ENCODE measurements at regions of chr6 and their contacts with region 1.

Region 1: GRCh38 chr6:45801471-45802289 is 214.0 kb downstream of the CLIC5 start:
- DNase-seq: peak; percentile 84
- H3K4me3 Mint-ChIP-seq: no peak overlapping the region
- H3K27ac Mint-ChIP-seq: no peak overlapping the region
- H3K4me1 Mint-ChIP-seq: no peaks in the 10 kb centered on the region
- H3K27me3 Mint-ChIP-seq: peaks cover 8% of the 10 kb centered on the region

Region 2: GRCh38 chr6:45436544-45437438 is 364.9 kb before region 1 on chr6:
- CTCF ChIA-PET with region 1: no interaction called
- POLR2A ChIA-PET with region 1: no interaction called
- intact Hi-C with region 1: loop called (anchors 5 kb)
- DNase-seq: peak; percentile 67
- H3K4me3 Mint-ChIP-seq: peak overlapping the region; percentile 65
- H3K27ac Mint-ChIP-seq: peak overlapping the region; percentile 92
- H3K4me1 Mint-ChIP-seq: peaks cover 85% of the 10 kb centered on the region
- H3K27me3 Mint-ChIP-seq: no peaks in the 10 kb centered on the region

Region 3: DNA sequence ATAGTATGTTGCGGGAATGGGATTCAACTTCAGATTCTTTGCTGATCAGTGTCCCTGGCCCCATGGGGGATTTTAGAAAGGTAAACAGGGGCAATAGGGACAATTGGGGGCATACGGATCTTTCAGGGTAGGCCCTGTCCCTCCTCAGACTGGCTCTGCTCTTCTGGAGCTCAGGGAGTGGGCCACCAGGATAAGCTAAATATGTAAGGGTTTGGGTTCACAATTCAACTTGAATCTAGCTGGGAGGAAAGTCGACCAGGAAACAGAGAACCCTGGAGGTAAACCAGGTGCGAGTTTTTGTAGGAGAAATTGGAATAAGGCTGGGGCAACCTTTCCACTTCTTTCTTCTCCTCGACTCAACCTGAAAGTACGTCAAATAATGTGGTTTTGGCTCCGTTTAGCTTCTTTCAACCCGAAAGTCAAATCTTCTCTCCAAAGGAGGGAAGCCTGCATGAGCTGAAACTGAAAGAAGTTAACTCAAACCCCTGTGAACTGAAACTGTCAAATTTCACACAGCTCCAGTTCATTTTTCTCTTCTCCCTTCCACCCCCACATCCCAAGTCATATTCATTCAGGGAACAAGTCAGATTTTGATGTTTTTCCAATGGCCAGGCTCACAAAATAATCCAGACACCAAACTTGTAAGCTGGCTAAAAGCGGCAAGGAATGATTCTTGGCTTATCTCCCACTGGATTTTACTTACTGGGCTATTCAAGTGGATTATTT is 64.2 kb before region 1 on chr6:
- CTCF ChIA-PET with region 1: interaction called, 6 read pairs
- POLR2A ChIA-PET with region 1: interaction called, 12 read pairs
- intact Hi-C with region 1: loop called (anchors 1 kb)
- DNase-seq: peak; percentile 24
- H3K4me3 Mint-ChIP-seq: peak overlapping the region; percentile 10
- H3K27ac Mint-ChIP-seq: peak overlapping the region; percentile 75
- H3K4me1 Mint-ChIP-seq: peaks cover 59% of the 10 kb centered on the region
- H3K27me3 Mint-ChIP-seq: peaks cover 8% of the 10 kb centered on the region

Region 4: DNA sequence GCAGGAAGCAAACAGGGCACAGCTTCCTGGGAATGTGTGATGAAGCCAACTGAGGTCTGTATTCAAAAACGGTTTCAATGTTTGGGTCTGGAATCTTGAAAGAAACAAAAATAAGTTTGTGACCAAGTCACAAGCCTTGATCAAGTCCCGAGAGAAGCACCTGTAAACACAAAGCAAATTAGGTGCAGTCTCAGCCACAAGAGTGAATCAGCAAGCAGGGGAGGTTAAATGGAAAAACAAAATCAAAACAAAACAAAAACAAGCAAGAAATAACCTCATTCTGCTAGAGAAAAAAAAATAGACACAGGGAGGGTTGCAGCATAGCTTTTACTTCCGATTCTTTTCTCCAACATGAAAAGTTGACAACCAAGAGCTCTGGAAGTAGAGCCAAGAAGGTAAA is 12.3 kb after region 1 on chr6:
- CTCF ChIA-PET with region 1: no interaction called
- POLR2A ChIA-PET with region 1: interaction called, 7 read pairs
- intact Hi-C with region 1: loop called (anchors 1 kb)
- DNase-seq: no peak
- H3K4me3 Mint-ChIP-seq: no peak overlapping the region
- H3K27ac Mint-ChIP-seq: peak overlapping the region; percentile 46
- H3K4me1 Mint-ChIP-seq: peaks cover 38% of the 10 kb centered on the region
- H3K27me3 Mint-ChIP-seq: peaks cover 7% of the 10 kb centered on the region

Region 5: GRCh38 chr6:45830441-45831139 is 28.9 kb after region 1 on chr6:
- CTCF ChIA-PET with region 1: interaction called, 7 read pairs
- POLR2A ChIA-PET with region 1: interaction called, 13 read pairs
- intact Hi-C with region 1: loop called (anchors 1 kb)
- DNase-seq: peak; percentile 88
- H3K4me3 Mint-ChIP-seq: peak overlapping the region; percentile 75
- H3K27ac Mint-ChIP-seq: peak overlapping the region; percentile 95
- H3K4me1 Mint-ChIP-seq: peaks cover 59% of the 10 kb centered on the region
- H3K27me3 Mint-ChIP-seq: peaks cover 2% of the 10 kb centered on the region